Activated naive CD4-positive, alpha-beta T cell treated with anti-CD3 and anti-CD28 coated beads for 36 hours (primary cell): ENCODE measurements at regions of chr22 and their contacts with region 1.

Region 1: DNA sequence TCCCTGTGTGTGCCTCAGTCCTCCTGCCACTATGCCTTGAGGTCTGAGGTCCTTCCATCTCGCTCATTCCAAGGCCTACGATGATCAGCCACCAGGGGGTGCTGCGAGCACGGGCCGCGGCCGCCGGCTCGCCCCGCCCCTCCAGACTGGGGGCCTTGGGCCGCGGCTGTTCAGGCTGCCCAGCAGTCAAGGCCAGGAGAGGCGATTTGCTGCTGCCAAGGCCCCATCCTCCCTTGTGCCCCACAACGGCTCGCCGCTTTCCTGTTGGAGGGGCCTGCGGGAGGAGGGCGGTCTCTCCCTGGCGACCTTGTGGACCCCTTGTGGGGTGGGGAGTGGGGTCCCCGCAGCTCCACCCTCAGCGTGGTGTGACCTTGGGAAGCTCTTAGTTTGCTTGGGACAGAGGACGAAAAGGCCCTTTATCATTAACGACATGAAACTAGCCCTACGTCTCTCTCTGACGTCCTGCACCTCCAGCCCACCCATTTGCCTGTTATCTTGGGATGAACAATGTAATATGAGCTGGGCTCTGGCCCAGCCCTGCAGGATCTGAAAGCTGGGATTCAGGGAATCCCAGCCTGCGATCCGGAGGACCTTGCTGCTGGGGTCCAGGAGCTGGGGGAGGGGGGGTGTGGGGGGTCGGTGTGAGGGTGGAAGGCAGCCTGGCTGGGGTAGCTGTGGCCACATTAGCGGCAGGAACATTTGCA is 5.3 kb upstream of the GALR3 start:
- DNase-seq: peak; percentile 83
- H3K4me3 Mint-ChIP-seq: no peak overlapping the region
- H3K27ac Mint-ChIP-seq: no peak overlapping the region
- H3K4me1 Mint-ChIP-seq: peaks cover 12% of the 10 kb centered on the region
- H3K27me3 Mint-ChIP-seq: peaks cover 13% of the 10 kb centered on the region

Region 2: GRCh38 chr22:37807410-37808293 is 10.2 kb before region 1 on chr22 and contains the start of gene GCAT:
- CTCF ChIA-PET with region 1: interaction called, 51 read pairs
- intact Hi-C with region 1: loop called (anchors 1 kb)
- DNase-seq: peak; percentile 96
- H3K4me3 Mint-ChIP-seq: peak within 1 kb of the TSS; percentile 80
- H3K27ac Mint-ChIP-seq: peak within 1 kb of the TSS; percentile 61
- H3K4me1 Mint-ChIP-seq: peaks cover 45% of the 10 kb centered on the region
- H3K27me3 Mint-ChIP-seq: peaks cover 48% of the 10 kb centered on the region
- total RNA-seq, gene GCAT: 26.9 to 27.2 TPM

Region 3: DNA sequence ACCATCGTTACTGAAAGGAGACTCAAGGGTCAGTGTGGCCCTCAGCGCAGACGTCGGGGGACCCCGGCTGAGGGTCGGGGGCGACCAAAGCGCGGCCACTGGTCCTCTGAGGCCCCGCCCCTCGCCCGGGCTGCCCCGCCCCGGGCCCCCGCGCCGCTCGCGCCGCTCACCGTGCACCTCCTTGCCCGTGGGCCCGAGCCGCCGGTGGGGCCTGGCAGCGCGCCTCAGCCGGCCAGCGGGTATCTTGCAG is 25.8 kb after region 1 on chr22:
- CTCF ChIA-PET with region 1: interaction called, 11 read pairs
- intact Hi-C with region 1: no loop called
- DNase-seq: no peak
- H3K4me3 Mint-ChIP-seq: peak overlapping the region; percentile 83
- H3K27ac Mint-ChIP-seq: no peak overlapping the region
- H3K4me1 Mint-ChIP-seq: peaks cover 30% of the 10 kb centered on the region
- H3K27me3 Mint-ChIP-seq: no peaks in the 10 kb centered on the region

Region 4: DNA sequence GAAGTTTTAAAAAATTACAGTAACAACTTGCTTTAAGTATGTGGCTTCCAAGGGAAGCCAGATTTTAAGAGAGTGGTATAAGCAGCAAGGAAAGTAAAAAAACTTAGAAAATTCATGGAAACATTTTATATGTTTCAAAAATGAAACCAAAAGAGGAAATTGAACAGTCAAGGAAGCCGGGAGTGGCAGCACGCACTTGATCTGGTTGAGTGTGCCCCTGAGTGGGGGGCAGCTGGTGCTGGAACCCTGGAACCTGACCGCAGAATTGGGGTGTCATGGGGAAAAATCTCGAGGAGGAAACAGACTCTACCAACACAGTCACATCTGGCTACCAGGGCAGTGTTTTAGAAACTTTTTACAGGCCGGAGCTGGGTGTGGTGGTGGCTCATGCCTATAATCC is 102.3 kb after region 1 on chr22:
- CTCF ChIA-PET with region 1: no interaction called
- intact Hi-C with region 1: no loop called
- DNase-seq: no peak
- H3K4me3 Mint-ChIP-seq: peak overlapping the region; percentile 18
- H3K27ac Mint-ChIP-seq: peak overlapping the region; percentile 78
- H3K4me1 Mint-ChIP-seq: peaks cover 6% of the 10 kb centered on the region
- H3K27me3 Mint-ChIP-seq: no peaks in the 10 kb centered on the region

Region 5: DNA sequence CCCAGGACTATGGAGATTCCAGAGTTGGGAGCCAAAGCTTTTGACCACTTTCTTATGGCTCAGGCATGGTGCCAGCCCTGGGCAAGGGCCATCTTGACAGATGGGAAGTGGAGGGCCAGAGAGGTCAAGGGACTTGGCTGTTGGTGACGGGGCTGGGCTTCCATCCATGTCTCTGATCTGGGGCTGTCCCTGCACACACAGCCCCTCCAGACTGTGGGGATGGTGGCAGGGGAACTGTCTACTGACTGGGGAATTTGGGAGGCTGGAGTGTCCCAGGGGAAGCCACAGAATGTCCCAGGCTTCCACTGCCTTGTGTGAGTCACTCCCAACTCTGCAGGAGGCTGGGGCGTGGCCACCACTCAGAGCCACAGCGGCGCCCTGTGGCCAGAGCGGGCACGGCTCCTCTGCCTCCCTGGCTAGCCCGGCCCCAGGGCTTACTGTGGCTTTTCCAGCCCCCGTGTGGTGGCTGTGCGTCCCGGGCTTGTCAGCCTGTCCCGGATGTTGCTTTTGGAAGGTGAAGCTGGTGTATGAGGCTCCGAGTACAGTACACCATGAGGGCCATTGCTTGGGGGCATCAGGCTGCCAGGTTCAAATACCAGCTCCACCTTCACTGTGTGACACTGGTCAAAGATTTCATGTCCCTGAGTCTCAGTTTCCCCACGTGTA is 116.0 kb after region 1 on chr22:
- CTCF ChIA-PET with region 1: interaction called, 39 read pairs
- intact Hi-C with region 1: loop called (anchors 1 kb)
- DNase-seq: peak; percentile 94
- H3K4me3 Mint-ChIP-seq: no peak overlapping the region
- H3K27ac Mint-ChIP-seq: peak overlapping the region; percentile 8
- H3K4me1 Mint-ChIP-seq: peaks cover 12% of the 10 kb centered on the region
- H3K27me3 Mint-ChIP-seq: no peaks in the 10 kb centered on the region

Region 6: GRCh38 chr22:37965940-37966664 is 148.2 kb after region 1 on chr22:
- CTCF ChIA-PET with region 1: interaction called, 23 read pairs
- intact Hi-C with region 1: loop called (anchors 1 kb)
- DNase-seq: no peak
- H3K4me3 Mint-ChIP-seq: no peak overlapping the region
- H3K27ac Mint-ChIP-seq: no peak overlapping the region
- H3K4me1 Mint-ChIP-seq: no peaks in the 10 kb centered on the region
- H3K27me3 Mint-ChIP-seq: no peaks in the 10 kb centered on the region